G401 (cell line): ENCODE measurements at regions of chr7 and their contacts with region 1.

Region 1: GRCh38 chr7:116588641-116589594 is 64.1 kb downstream of the CAV1 start:
- DNase-seq: peak; percentile 52

Region 2: DNA sequence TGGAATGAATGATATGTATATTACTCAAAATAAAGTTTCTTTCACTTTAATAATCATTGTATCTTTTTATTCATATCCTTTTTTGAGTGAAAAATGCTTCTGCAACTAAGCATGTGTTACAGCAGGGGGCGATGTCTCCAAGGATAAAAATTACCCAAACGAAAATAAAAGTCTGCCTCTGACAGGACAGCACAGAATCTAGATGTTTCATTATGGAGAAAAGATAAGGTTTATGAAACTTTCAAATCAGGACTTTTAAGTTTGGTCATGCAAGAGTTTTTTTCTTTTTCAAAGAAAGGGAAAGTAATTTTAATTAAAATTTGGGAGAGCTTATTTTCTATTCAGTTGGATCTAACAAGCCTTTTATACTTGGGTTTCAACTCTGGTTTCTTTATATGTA is 330.2 kb before region 1 on chr7:
- in situ Hi-C with region 1: loop called (anchors 10 kb)
- DNase-seq: peak; percentile 19

Region 3: GRCh38 chr7:116918704-116919103 is 329.8 kb after region 1 on chr7:
- in situ Hi-C with region 1: no loop called
- DNase-seq: no peak